PC-3 (cell line): ENCODE measurements at regions of chr9 and their contacts with region 1.

Region 1: GRCh38 chr9:95510709-95511615 is 5.8 kb downstream of the PTCH1 start:
- DNase-seq: peak; percentile 89
- ATAC-seq: peak; percentile 64
- H3K4me3 ChIP-seq: peak overlapping the region; percentile 96
- H3K27ac ChIP-seq: peak overlapping the region; percentile 66
- H3K4me1 ChIP-seq: peaks cover 12% of the 10 kb centered on the region; the same call in 1 of the 2 replicates
- H3K27me3 ChIP-seq: no peaks in the 10 kb centered on the region
- CTCF ChIP-seq: no peak

Region 2: DNA sequence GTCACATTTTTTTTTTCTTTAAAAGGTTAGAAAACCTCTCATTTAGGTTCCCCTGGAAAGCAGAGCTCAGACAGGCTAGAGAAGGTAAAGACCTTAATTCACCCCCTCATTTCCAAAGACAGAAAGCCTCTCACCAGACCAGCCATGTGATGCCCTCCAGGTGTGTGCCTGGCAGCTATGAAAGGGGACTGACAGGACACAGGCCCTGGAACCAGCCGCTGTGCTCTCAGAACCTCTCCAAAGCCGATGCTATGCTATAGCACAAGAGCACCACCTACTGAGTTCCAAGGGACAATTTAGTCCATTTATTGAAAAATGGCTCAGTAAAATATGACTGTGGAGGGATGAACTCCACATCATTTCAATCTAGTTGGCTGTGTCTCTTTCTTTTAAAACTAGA is 242.3 kb before region 1 on chr9:
- CTCF ChIA-PET with region 1: no interaction called
- POLR2A ChIA-PET with region 1: no interaction called
- intact Hi-C with region 1: loop called (anchors 10 kb)
- DNase-seq: peak; percentile 23
- ATAC-seq: peak; percentile 45; the same call in 1 of the 2 replicates
- H3K4me3 ChIP-seq: no peak overlapping the region
- H3K27ac ChIP-seq: no peak overlapping the region
- H3K4me1 ChIP-seq: no peaks in the 10 kb centered on the region
- H3K27me3 ChIP-seq: no peaks in the 10 kb centered on the region
- CTCF ChIP-seq: peak; percentile 47

Region 3: GRCh38 chr9:95317119-95317892 is 193.7 kb before region 1 on chr9 and contains the start of gene FANCC:
- CTCF ChIA-PET with region 1: no interaction called
- POLR2A ChIA-PET with region 1: no interaction called
- intact Hi-C with region 1: loop called (anchors 2 kb)
- DNase-seq: peak; percentile 81
- ATAC-seq: peak; percentile 68
- H3K4me3 ChIP-seq: peak within 1 kb of the TSS; percentile 94
- H3K27ac ChIP-seq: peak within 1 kb of the TSS; percentile 97
- H3K4me1 ChIP-seq: peaks cover 28% of the 10 kb centered on the region
- H3K27me3 ChIP-seq: no peaks in the 10 kb centered on the region
- CTCF ChIP-seq: no peak
- total RNA-seq, gene FANCC: 6.0 and 6.9 TPM in 2 replicates

Region 4: GRCh38 chr9:95383185-95383673 is 127.7 kb before region 1 on chr9:
- CTCF ChIA-PET with region 1: no interaction called
- POLR2A ChIA-PET with region 1: no interaction called
- intact Hi-C with region 1: loop called (anchors 1 kb)
- DNase-seq: peak; percentile 84
- ATAC-seq: peak; percentile 74
- H3K4me3 ChIP-seq: peak overlapping the region; percentile 33; the same call in 1 of the 2 replicates
- H3K27ac ChIP-seq: peak overlapping the region; percentile 68
- H3K4me1 ChIP-seq: peaks cover 32% of the 10 kb centered on the region
- H3K27me3 ChIP-seq: no peaks in the 10 kb centered on the region
- CTCF ChIP-seq: no peak

Region 5: DNA sequence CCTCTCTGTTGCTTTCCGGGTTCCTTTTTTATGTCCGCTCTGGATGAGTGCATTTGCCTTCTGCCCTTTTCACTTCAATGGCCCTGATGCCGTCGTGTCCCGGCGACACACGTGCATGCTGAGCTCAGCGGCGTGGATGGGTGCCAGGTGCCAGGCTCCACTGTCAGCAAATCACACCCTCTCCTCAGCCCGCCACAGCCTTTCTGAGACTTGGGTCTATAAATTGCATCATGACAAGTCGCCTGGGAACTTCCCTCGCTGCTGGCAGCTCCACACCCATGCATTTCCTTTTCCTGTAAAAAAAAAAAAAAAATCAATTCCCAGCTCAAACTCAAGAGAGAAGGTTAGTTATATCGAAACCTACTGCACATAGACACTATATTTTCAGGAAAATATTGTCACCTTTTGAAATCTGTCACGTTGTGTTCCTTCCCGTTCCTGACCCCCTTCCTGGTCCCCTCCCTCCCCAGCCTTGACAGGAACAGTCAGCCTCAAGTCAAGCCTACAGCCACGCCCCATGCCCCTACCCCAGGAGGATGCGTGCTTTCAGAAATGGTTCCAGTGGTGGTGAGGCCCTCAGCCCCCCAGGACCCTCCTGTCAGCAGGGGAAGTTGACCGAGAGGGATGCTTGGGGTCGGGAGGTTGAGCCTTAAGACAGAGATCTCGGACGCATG is 116.1 kb after region 1 on chr9:
- CTCF ChIA-PET with region 1: no interaction called
- POLR2A ChIA-PET with region 1: no interaction called
- intact Hi-C with region 1: loop called (anchors 10 kb)
- DNase-seq: no peak
- ATAC-seq: peak; percentile 28; the same call in 1 of the 2 replicates
- H3K4me3 ChIP-seq: no peak overlapping the region
- H3K27ac ChIP-seq: no peak overlapping the region
- H3K4me1 ChIP-seq: peaks cover 11% of the 10 kb centered on the region
- H3K27me3 ChIP-seq: peaks cover 17% of the 10 kb centered on the region
- CTCF ChIP-seq: no peak

Region 6: GRCh38 chr9:95875305-95876137 is 364.6 kb after region 1 on chr9 and contains the start of gene ERCC6L2:
- CTCF ChIA-PET with region 1: no interaction called
- POLR2A ChIA-PET with region 1: no interaction called
- intact Hi-C with region 1: loop called (anchors 5 kb)
- DNase-seq: peak; percentile 97
- ATAC-seq: peak; percentile 83
- H3K4me3 ChIP-seq: no peak within 1 kb of the TSS
- H3K27ac ChIP-seq: peak within 1 kb of the TSS; percentile 96
- H3K4me1 ChIP-seq: peaks cover 21% of the 10 kb centered on the region
- H3K27me3 ChIP-seq: no peaks in the 10 kb centered on the region
- CTCF ChIP-seq: no peak
- total RNA-seq, gene ERCC6L2: 18.8 and 32.7 TPM in 2 replicates

Region 7: DNA sequence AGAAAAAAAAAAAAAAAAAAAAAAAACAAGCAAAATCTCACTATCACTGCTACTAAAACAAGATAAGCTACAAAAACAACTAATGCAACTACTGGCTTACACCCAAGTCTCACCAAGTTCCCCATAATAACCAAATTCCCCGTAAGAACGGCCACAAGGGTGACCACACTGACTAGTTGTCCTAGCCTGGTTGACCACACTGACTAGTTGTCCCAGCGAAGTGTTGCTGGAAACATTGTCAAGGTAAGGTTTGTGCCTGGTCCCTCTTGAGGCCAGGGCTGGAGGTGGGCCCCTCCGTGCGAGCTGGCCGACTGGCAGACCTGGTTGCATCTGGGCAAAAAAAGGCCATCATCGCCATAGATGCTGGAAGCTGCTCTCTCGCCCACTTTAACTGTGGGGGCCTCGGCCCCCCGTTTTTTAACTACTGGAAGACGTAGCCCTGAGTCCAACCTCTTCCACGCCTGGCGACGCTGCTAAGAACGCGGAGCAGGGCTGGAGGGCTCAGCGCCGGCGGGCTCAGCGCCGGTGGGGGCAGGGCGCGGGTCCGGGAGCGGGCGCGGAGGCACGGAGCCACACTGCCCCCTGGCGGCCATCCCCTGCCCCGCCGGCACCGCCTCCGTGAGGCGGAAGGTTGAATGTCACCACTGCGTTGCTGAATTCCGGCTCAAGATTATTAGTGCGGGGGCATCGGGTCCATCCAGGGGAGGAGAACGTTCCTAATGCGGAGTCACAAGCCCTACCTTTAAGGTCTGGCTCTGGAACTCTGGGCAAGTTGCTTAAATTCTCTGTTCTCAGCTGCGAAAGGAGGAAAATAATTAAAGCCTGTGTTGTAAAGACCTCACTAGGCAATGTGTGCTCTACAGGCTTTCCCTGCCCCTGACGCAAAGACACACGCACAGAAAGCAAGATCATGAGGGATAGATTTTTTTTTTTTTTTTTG is 707.1 kb after region 1 on chr9:
- CTCF ChIA-PET with region 1: no interaction called
- POLR2A ChIA-PET with region 1: no interaction called
- intact Hi-C with region 1: loop called (anchors 10 kb)
- DNase-seq: peak; percentile 67
- ATAC-seq: peak; percentile 93
- H3K4me3 ChIP-seq: peak overlapping the region; percentile 62
- H3K27ac ChIP-seq: no peak overlapping the region
- H3K4me1 ChIP-seq: no peaks in the 10 kb centered on the region
- H3K27me3 ChIP-seq: no peaks in the 10 kb centered on the region
- CTCF ChIP-seq: peak; percentile 87